Right ventricle myocardium inferior (tissue), 1 donor: ENCODE measurements at regions of chr10 and their contacts with region 1.

Region 1: DNA sequence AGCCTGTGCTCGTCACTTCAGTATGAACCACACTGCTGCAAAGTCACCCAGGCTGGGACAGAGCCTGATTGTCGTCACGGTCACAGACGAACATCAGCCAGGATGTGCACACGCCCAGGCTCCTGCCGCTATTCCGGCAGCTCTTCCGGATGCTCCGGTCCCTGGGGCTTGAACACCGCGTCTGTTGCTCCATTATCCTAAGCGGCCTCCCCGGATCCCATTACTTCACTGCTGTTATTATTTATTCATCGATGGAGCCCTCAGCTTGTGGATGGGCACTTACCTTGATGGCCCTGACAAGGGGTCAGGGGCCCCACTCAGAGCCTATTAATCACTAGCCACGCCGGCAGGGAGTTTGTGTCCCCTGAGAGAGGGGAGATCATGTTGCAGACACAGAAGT is 120.8 kb upstream of the PCBD1 start:
- DNase-seq: no peak
- ATAC-seq: no peak

Region 2: DNA sequence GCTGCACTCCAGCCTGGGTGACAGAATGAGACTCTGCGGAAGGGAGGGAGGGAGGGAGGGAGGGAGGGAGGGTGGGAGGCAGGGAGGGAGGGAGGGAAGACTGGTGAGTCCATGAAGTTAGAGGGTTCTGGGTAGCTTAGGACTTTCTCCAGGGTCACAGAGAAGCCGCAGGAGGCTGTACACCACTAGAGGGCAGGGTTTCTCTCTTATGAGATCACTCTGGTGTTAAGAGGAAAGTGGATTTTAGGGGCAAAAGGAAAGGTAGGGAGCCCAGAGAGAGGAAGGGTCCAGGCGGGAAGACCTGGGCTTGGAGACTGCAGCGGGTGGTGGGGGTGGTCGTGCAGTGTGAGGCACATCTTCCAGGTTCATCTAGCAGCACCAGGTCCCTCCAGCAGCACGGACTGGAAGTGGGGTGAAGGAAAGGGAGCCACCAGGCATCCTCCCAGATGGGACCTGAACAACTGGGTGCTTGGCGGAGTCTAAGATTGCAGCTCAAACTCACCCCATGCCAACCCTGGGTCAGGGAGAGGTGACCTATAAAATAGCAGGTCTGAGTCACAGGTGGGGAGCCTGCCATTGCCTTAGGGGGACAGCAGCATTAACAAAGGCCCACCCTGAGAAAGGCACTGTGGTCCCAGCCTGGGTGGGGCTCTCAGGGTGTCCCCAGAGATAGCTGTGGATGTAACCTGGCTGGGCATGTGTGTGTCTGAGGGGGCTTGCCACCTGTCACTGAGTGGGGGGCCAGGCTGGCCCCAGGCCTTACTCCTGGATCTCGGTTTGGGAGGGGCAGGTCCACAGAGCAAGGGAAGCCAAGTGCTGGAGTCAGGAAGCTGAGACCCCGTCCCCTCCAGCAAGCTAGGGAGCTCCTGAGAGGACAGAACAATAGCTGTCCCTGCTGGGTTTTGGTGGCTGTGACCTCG is 261.4 kb after region 1 on chr10:
- intact Hi-C with region 1: loop called (anchors 10 kb)
- DNase-seq: peak; percentile 64
- ATAC-seq: no peak